CD4-positive, alpha-beta T cell (primary cell): ENCODE measurements at regions of chr5 and their contacts with region 1.

Region 1: DNA sequence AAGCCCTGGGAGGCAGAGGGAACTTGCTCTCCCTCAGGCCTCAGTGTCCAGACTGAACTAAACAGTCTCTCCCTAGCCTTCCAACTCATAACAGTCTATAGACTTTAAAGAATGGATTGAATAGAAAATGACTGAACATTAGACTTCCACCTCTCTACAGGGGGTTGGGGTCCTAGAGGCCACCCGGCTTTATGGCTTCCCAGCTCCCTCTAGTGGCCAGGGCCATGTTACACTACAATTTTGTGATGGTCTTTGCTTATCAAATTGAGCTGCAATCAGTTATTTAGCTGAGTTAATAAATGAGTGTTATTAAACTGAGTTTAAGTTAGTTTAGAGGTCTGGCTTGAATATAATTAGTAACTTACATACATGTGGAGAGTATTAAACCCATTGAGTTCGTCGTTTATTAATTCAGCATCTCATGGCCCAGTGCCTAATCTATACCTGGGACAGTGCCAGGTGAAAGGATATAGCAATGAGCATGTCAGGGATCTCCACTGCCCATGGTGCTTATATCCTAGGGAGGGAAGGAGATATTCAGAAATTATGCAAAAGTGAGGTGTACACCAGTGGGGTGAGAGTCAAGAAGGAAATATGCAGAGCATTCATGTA is 105.2 kb downstream of the SH3TC2 start:
- DNase-seq: peak in 13 of 14 experiments; percentile 6 to 63 (median 25)
- ATAC-seq: no peak
- H3K4me3 ChIP-seq: no peak overlapping the region
- H3K4me3 Mint-ChIP-seq: no peak overlapping the region
- H3K27ac ChIP-seq: no peak overlapping the region
- H3K27ac Mint-ChIP-seq: no peak overlapping the region
- H3K4me1 ChIP-seq: no peaks in the 10 kb centered on the region
- H3K4me1 Mint-ChIP-seq: no peaks in the 10 kb centered on the region
- H3K27me3 ChIP-seq: no peaks in the 10 kb centered on the region
- H3K27me3 Mint-ChIP-seq: no peaks in the 10 kb centered on the region
- CTCF ChIP-seq: peak; percentile 72

Region 2: DNA sequence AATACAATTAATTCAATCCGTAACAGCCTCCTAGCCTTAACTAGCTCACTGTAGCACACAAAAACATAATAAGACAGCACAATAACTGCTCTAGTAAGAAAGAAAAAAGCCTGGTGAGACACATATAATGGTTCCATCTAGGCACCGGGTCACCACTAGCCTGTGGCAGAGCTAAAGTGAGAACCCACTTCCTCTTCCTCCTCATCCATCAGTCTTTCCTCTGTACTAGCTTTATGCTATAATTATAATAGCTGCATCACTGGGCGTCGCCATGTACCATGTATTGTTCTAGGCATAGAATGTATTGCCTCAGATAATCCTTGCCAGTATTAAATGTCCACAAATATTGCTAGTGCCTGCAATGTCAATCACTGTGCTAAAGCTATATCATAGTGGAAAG is 108.2 kb before region 1 on chr5:
- CTCF ChIA-PET with region 1: interaction called, 7 read pairs
- POLR2A ChIA-PET with region 1: no interaction called
- intact Hi-C with region 1: loop called in 1 of 2 experiments (anchors 10 kb)
- DNase-seq: peak in 7 of 14 experiments; percentile 7 to 87 (median 30)
- ATAC-seq: peak; percentile 75
- H3K4me3 ChIP-seq: no peak overlapping the region
- H3K4me3 Mint-ChIP-seq: peak overlapping the region; percentile 1
- H3K27ac ChIP-seq: peak overlapping the region in 1 of 2 donors; percentile 19
- H3K27ac Mint-ChIP-seq: peak overlapping the region; percentile 29
- H3K4me1 ChIP-seq: peaks cover 63% of the 10 kb centered on the region
- H3K4me1 Mint-ChIP-seq: peaks cover 31% of the 10 kb centered on the region
- H3K27me3 ChIP-seq: no peaks in the 10 kb centered on the region
- H3K27me3 Mint-ChIP-seq: no peaks in the 10 kb centered on the region
- CTCF ChIP-seq: no peak

Region 3: DNA sequence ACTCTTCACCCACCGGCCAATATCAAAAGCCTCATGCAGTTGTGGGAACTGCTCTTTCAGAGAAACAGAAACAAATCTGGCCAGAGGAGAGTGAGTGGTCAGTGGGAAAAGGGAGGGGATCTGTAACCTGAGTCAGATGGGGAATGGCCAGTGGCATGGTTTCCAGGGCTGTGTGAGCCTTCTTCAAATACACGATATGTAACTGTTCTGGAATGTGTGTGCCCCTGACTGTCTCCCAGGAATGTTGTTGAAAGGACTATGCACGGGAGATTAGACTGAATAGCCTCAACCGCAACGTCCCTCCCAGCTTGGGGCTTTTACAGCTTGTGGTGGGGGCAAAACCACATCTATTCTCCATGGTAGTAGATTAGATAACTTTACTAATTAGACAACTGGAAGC is 44.4 kb after region 1 on chr5:
- CTCF ChIA-PET with region 1: no interaction called
- POLR2A ChIA-PET with region 1: no interaction called
- intact Hi-C with region 1: no loop called
- DNase-seq: no peak
- ATAC-seq: no peak
- H3K4me3 ChIP-seq: no peak overlapping the region
- H3K4me3 Mint-ChIP-seq: no peak overlapping the region
- H3K27ac ChIP-seq: no peak overlapping the region
- H3K27ac Mint-ChIP-seq: no peak overlapping the region
- H3K4me1 ChIP-seq: no peaks in the 10 kb centered on the region
- H3K4me1 Mint-ChIP-seq: no peaks in the 10 kb centered on the region
- H3K27me3 ChIP-seq: peaks cover 0 to 5% of the 10 kb centered on the region in 2 experiments
- H3K27me3 Mint-ChIP-seq: peaks cover 24% of the 10 kb centered on the region
- CTCF ChIP-seq: no peak